Endothelial cell of umbilical vein (primary cell): ENCODE measurements at regions of chr4 and their contacts with region 1.

Region 1: GRCh38 chr4:123616951-123617461 is 220.4 kb downstream of the SPRY1 start:
- DNase-seq: peak; percentile 81
- H3K4me3 ChIP-seq: no peak overlapping the region
- H3K27ac ChIP-seq: no peak overlapping the region
- H3K4me1 ChIP-seq: peaks cover 19% of the 10 kb centered on the region
- H3K27me3 ChIP-seq: no peaks in the 10 kb centered on the region
- CTCF ChIP-seq: no peak
- POLR2A ChIP-seq: no peak

Region 2: GRCh38 chr4:123564758-123565346 is 52.2 kb before region 1 on chr4:
- CTCF ChIA-PET with region 1: interaction called, 5 read pairs
- POLR2A ChIA-PET with region 1: no interaction called
- dilution Hi-C with region 1: no loop called
- intact Hi-C with region 1: loop called (anchors 2 kb)
- DNase-seq: peak; percentile 74
- H3K4me3 ChIP-seq: no peak overlapping the region
- H3K27ac ChIP-seq: no peak overlapping the region
- H3K4me1 ChIP-seq: peaks cover 5% of the 10 kb centered on the region
- H3K27me3 ChIP-seq: peaks cover 2 to 5% of the 10 kb centered on the region in 2 experiments
- CTCF ChIP-seq: peak; percentile 81 to 84
- POLR2A ChIP-seq: no peak

Region 3: DNA sequence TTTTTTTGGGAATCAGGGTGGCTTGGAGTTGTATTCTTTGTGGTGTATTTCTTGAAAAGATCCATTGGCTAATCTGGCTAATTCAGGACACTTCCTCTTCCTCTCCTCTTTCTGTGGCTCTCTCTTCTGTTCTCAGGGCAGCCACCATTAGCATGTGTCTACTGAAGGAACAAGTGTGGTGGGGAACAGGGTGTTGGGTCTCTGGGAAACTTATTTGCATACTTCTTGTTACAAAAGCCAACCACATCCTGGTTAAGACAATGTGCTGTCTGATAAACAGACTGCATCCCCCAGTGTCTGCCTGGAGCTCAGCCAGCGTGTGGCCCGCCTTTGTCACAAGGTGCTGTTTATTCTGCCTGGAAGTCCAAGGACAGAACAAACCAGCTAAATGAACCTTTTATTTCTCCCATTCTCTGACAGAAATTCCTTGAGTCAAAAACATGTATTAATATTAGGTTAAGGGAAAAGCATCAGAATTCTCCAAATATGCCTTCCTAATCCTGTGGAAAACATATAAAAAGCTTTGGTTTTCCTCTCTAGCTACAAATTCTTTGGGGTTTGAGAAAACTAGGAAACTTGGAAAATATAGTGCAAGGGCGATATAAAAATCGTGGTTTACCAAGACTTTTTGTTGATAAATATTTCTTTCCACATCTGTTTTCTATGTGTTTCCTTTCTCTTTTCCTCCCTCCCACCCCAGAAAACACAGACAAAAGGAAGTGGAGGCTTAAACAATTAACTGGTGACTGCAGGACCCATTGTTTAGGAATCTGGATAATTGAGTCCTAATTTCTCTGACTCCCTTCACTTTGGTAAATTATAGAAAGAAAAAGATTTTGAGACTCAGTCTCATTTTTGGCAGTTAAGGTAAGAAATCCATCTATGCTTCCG is 16.8 kb before region 1 on chr4:
- CTCF ChIA-PET with region 1: interaction called, 4 read pairs
- POLR2A ChIA-PET with region 1: no interaction called
- dilution Hi-C with region 1: no loop called
- intact Hi-C with region 1: loop called (anchors 1 kb)
- DNase-seq: peak; percentile 94
- H3K4me3 ChIP-seq: no peak overlapping the region
- H3K27ac ChIP-seq: peak overlapping the region; percentile 73
- H3K4me1 ChIP-seq: peaks cover 23% of the 10 kb centered on the region
- H3K27me3 ChIP-seq: no peaks in the 10 kb centered on the region
- CTCF ChIP-seq: no peak
- POLR2A ChIP-seq: no peak

Region 4: DNA sequence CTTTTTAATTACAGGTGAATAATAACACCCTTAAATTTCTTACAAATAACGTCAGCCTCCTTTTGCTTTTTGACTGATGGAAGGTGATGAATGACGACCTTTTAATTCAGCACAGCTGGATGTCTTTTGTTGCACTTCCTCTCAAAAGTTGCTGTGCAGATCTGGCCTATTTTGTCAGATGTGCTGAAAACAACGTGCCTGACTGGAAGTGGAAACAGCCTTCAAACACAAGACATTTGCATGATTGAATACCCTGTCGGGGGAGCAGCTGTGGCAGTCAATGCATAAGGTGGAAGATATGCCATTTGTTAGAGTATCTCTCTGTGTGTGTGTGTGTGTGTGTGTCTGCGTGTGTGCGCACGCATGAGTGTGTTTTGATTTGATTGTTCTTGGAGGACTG is 359.3 kb after region 1 on chr4:
- CTCF ChIA-PET with region 1: no interaction called
- POLR2A ChIA-PET with region 1: no interaction called
- dilution Hi-C with region 1: no loop called
- intact Hi-C with region 1: loop called (anchors 1 kb)
- DNase-seq: peak; percentile 90
- H3K4me3 ChIP-seq: no peak overlapping the region
- H3K27ac ChIP-seq: peak overlapping the region; percentile 70
- H3K4me1 ChIP-seq: peaks cover 30% of the 10 kb centered on the region
- H3K27me3 ChIP-seq: no peaks in the 10 kb centered on the region
- CTCF ChIP-seq: no peak
- POLR2A ChIP-seq: no peak